ENCODE measurements at regions of chr18 and their contacts with region 1.

Region 1: GRCh38 chr18:70431203-70431624 is 142.4 kb downstream of the SOCS6 start:
- DNase-seq: no peak

Region 2: DNA sequence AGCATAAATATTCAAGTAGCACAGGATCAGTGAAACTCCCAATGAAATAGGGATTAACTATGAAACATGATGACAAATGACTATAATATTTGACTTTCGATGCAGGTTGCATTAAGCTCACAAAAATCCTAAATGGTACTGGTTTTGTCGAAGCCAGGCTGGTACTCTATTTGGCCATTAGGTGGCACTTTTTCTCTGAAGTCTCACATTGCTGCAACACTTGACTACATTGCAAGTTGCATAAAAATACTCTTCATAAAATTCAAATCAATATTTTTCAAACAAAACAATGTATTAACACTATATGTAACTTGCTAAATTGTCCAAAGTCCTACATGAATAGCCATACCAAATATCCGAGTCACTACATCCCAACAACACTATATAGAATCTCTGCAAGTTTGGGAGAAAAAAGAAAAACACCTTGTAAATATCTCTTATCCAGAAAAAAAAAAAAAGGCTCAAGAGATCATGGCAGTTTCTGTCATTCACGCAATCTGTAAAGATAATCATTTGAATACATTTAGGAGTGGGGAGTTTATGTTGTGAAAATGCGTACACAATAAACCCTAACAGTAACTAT is 235.3 kb before region 1 on chr18:
- intact Hi-C with region 1: loop called (anchors 1 kb)
- DNase-seq: peak in 1 of 10 donors; percentile 19

Region 3: DNA sequence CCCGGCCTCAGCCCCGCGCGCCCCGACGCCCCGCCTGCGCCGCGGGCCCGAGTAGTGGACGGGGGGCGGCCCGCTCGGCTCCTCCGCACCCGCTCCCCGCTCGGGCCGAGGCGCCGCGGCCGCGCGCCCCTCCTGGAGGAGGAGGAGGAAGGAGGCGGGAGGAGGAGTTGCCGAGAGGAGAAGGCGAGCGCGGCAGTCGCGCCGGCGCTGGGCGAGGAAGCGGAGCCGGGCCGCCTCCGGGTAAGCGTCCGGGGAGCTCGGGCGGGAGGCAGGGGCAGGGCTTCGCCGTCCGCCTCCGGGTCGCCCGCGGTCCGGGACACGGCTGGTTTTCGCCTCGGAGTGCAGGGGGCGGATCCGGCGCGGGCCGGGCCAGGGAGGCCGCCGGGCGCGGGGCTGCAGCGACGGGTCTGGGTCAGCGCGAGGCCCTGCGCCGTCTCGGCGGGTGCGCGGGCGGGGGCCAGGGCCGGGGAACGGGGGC is 142.3 kb before region 1 on chr18 and contains the start of gene SOCS6:
- intact Hi-C with region 1: loop called (anchors 10 kb)
- DNase-seq: peak; percentile 37 to 95 (median 56)

Region 4: DNA sequence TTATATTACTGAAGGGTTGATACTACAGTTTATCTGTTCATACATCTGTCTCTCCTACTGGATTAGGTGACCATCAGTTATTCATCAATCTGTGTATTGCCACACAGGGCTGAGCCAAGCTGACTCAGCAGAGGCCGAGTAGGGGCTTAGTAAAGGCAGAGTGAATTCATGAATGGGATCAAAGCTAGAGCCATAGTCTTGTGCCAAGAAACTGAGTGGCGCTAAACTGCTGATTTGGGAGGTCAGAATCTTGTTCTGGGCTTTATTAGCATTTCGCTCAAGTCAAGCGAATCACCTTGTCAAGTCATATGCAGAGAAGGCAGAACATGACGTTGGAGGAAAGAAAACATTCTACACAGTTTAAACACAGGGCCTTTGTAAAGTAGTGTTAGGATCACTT is 108.3 kb before region 1 on chr18:
- intact Hi-C with region 1: no loop called
- DNase-seq: peak in 1 of 10 donors; percentile 24

Measured in posterior cingulate gyrus (tissue), 11 donors.